Activated T-helper 1 cell treated with anti-CD3 and anti-CD28 coated beads, Interleukin-12 subunit alpha, Interleukin-12 subunit beta, Interleukin-2, Interleukin-4 antibody, amounts not matched to agents 30 ng/mL and 10 ng/mL and 1 ng/mL, durations not matched to agents 14 hours and 24 hours and 36 hours (primary cell): ENCODE measurements at regions of chr19 and their contacts with region 1.

Region 1: DNA sequence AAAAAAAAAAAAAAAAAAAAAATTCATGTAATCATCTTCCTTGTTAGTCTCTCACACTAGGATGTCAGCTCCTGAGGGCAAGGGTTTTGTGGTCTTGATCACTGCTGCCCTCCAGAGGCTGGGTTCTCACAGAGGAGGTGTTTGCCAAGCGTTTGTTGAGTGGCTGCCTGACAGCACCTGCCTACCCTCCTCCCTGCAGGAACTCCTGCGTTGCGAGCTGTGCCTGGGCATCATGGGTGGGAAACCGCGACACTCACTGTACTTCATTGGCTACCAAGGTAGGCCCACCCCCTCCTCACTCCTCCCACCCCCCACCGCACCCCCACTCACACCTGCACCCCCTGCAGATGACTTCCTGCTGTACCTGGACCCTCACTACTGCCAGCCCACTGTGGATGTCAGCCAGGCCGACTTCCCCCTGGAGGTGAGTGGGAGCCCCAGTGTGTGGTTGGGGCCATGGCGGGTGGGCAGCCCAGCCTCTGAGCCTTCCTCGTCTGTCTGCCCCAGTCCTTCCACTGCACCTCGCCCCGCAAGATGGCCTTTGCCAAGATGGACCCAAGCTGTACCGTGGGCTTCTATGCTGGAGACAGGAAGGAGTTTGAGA is 8.1 kb downstream of the ATG4D start:
- DNase-seq: no peak
- H3K4me3 Mint-ChIP-seq: no peak overlapping the region
- H3K27ac Mint-ChIP-seq: peak overlapping the region; percentile 65
- H3K4me1 Mint-ChIP-seq: peaks cover 36% of the 10 kb centered on the region
- H3K27me3 Mint-ChIP-seq: no peaks in the 10 kb centered on the region

Region 2: DNA sequence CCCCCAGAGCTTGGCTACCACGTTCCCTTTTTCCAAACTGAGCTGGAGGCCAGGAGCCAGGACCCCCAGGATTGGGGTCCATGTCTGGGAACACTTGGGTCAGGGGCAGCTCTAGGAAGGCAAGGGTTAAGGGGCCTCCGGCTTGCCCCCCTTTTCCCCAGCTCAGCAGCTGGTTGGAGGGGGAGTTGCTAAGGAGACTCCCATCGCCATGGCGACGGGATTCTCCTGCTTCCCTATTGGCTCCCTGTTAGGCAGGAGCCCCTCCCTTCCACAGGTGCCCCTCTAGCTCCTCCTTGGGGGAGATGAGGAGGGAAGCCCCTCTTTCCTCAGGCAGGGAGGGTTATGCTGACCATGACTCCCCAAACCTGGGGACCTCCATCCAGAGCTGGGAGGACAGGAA is 97.5 kb before region 1 on chr19:
- intact Hi-C with region 1: no loop called
- DNase-seq: no peak
- H3K4me3 Mint-ChIP-seq: no peak overlapping the region
- H3K27ac Mint-ChIP-seq: no peak overlapping the region
- H3K4me1 Mint-ChIP-seq: peaks cover 28% of the 10 kb centered on the region
- H3K27me3 Mint-ChIP-seq: no peaks in the 10 kb centered on the region

Region 3: DNA sequence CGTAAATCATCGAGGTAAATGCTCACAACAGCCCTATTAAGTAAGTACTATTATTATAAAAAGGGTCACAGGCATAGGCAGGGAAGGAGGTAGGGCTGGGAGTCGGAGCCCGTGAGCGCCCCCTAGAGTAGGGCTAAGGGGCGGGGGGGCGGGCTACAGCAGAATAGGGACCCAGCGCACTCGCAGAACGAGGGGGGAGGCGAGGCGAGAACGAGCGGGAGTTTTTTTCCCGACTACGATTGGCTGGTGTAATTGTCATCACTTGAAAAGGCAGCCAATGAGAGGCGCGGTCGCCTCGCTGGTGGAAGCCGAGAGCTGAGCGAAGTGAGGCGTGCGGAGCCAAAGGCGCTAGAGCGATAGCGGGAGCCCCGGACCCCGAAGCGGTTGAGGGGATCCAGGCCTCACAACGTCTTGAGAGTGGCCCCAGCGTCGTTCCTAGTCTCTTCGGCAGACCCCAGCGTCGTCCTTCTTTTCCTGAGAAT is 72.9 kb before region 1 on chr19:
- intact Hi-C with region 1: loop called (anchors 5 kb)
- DNase-seq: peak; percentile 86
- H3K4me3 Mint-ChIP-seq: peak overlapping the region; percentile 68
- H3K27ac Mint-ChIP-seq: peak overlapping the region; percentile 76
- H3K4me1 Mint-ChIP-seq: peaks cover 16% of the 10 kb centered on the region
- H3K27me3 Mint-ChIP-seq: no peaks in the 10 kb centered on the region

Region 4: GRCh38 chr19:10717356-10718204 is 165.8 kb after region 1 on chr19 and contains the start of gene DNM2:
- intact Hi-C with region 1: no loop called
- DNase-seq: peak; percentile 99
- H3K4me3 Mint-ChIP-seq: peak within 1 kb of the TSS; percentile 98
- H3K27ac Mint-ChIP-seq: peak within 1 kb of the TSS; percentile 88
- H3K4me1 Mint-ChIP-seq: peaks cover 29% of the 10 kb centered on the region
- H3K27me3 Mint-ChIP-seq: no peaks in the 10 kb centered on the region
- total RNA-seq, gene DNM2: 236 and 240 TPM in 2 replicates